ENCODE measurements at regions of chr17 and their contacts with region 1.

Region 1: DNA sequence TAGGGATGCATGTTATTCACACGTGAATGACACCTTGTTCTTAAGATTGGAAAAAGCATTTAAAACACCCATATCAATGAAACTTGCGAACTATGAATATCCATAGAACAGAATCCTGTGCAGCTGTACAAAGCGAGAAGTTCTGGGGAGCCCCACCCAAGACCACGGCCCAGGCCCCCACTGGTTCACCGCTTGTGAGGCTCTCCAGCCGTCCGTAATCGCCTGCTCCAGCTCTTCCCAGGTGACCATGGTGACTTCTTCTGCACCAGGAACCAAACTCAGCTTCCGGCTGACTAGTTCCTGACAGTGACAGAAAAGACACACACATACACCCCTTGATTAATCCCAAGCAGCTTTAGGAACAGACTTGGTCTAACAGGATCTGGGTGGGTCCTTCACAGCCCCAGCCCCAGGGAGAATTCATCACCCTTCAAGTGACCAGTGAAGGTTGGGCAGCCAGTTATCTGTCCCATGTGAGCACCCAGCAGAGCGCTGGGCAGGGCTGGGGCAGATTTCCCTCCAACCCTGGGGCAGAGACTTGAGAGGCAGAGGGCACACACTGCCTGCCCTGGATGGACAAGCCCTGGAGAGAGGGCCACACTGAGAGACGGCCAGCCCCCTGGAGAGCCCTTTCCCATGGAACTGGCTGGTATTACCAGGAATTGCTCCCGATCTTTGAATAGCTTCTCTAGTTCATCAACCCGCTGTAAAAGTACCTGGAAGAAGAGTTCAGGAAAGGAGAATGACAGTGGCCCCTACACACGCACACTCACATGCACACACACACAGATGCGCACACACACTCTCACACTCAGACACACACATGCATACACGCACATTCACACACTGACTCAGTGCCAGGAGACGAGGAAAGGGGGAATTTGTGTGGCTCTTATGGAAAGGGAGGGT is 3.6 kb downstream of the QRICH2 start:
- DNase-seq: no peak
- ATAC-seq: no peak
- H3K4me3 ChIP-seq: no peak overlapping the region
- H3K4me3 Mint-ChIP-seq: no peak overlapping the region
- H3K27ac ChIP-seq: no peak overlapping the region
- H3K27ac Mint-ChIP-seq: no peak overlapping the region
- H3K4me1 ChIP-seq: no peaks in the 10 kb centered on the region
- H3K4me1 Mint-ChIP-seq: peaks cover 3% of the 10 kb centered on the region
- H3K27me3 ChIP-seq: no peaks in the 10 kb centered on the region
- H3K27me3 Mint-ChIP-seq: peaks cover 3% of the 10 kb centered on the region
- CTCF ChIP-seq: no peak

Region 2: GRCh38 chr17:76384222-76384986 is 79.9 kb after region 1 on chr17 and contains the start of gene SPHK1:
- CTCF ChIA-PET with region 1: interaction called, 12 read pairs
- POLR2A ChIA-PET with region 1: no interaction called
- intact Hi-C with region 1: no loop called
- DNase-seq: peak; percentile 81
- ATAC-seq: peak; percentile 76
- H3K4me3 ChIP-seq: peak within 1 kb of the TSS; percentile 40 to 71 (median 58)
- H3K4me3 Mint-ChIP-seq: peak within 1 kb of the TSS; percentile 84
- H3K27ac ChIP-seq: no peak within 1 kb of the TSS
- H3K27ac Mint-ChIP-seq: peak within 1 kb of the TSS; percentile 78
- H3K4me1 ChIP-seq: peaks cover 26 to 29% of the 10 kb centered on the region in 2 donors
- H3K4me1 Mint-ChIP-seq: peaks cover 17% of the 10 kb centered on the region
- H3K27me3 ChIP-seq: peaks cover 0 to 24% (median 8%) of the 10 kb centered on the region in 4 experiments
- H3K27me3 Mint-ChIP-seq: peaks cover 7% of the 10 kb centered on the region
- CTCF ChIP-seq: no peak
- total RNA-seq, gene SPHK1: 2.2 and 2.4 TPM in 2 replicates

Measured in B cell (primary cell).